Aorta (tissue), 5 donors: ENCODE measurements at regions of chr6 and their contacts with region 1.

Region 1: DNA sequence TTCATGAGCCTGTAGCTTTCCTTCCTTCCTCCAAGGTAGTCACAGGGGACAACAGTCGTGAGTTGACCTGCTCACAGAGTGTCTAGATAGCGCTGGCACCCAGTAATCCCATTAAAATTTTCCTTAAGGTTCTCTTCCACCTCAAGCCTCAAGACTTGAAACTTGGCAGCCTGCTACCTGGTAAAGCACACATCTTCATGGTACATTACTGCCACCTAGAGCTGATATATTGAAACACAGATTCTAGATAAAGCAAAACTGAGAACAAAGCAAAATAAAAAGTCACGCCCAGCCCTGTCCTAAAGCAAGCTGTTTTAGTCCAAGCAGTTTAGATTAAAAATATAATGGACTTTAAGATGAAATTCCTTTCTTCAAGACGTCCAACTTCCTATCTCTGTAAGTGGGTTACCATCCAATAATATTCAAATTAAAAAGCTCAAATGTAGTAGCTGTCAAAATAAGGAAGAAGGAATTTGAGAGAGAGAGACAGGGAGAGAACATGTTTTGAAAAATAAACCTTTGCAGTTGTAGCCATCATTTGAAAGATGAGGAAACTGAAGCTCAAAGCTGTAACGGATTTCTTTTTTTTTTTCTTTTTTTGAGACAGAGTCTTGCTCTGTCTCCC is 50.7 kb upstream of the CD83 start:
- DNase-seq: no peak
- ATAC-seq: peak; percentile 78
- H3K4me3 ChIP-seq: no peak overlapping the region
- H3K27ac ChIP-seq: no peak overlapping the region
- H3K4me1 ChIP-seq: no peaks in the 10 kb centered on the region
- H3K27me3 ChIP-seq: no peaks in the 10 kb centered on the region

Region 2: GRCh38 chr6:13336553-13336952 is 730.3 kb before region 1 on chr6:
- intact Hi-C with region 1: loop called in 1 of 2 experiments (anchors 5 kb)
- DNase-seq: peak in 1 of 2 donors; percentile 94
- ATAC-seq: peak; percentile 88
- H3K4me3 ChIP-seq: no peak overlapping the region
- H3K27ac ChIP-seq: no peak overlapping the region
- H3K4me1 ChIP-seq: no peaks in the 10 kb centered on the region
- H3K27me3 ChIP-seq: no peaks in the 10 kb centered on the region

Region 3: DNA sequence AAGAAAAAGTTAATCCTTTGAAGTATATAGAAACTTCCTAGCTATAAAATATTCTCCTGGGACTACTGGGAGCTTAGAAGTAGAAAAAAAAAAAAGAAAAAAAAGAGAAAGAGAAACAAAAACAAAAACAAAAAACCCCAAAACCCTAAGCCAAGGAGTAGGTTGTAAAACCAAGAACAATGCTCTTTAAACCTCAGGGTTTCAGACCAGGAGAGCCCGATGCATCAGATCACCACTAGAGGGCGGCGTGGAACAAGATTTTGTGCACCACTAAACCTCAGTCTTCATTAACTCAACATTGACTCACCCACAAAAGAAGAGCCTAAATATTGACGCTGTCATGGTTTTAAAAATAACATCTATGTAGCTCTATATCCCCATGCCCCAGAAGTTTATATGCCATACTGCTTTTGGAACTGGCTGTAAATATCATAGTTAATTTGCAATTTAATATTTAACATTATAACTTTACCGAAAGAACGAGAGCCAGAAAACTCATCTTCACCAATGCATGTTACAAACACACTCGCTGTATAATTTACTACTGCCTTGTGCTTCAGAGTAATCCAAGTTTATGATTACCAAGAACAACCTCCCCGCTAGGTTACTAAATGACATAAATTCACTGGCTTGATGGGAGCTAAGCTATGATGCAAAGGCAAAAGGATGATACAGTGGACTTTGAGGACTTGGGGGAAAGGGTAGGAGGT is 271.7 kb before region 1 on chr6:
- intact Hi-C with region 1: loop called in 1 of 2 experiments (anchors 10 kb)
- DNase-seq: peak; percentile 87 to 92
- ATAC-seq: peak; percentile 91
- H3K4me3 ChIP-seq: no peak overlapping the region
- H3K27ac ChIP-seq: no peak overlapping the region
- H3K4me1 ChIP-seq: no peaks in the 10 kb centered on the region
- H3K27me3 ChIP-seq: no peaks in the 10 kb centered on the region

Region 4: GRCh38 chr6:13814176-13814937 is 252.5 kb before region 1 on chr6 and contains the start of gene MCUR1:
- intact Hi-C with region 1: loop called in 1 of 2 experiments (anchors 10 kb)
- DNase-seq: peak; percentile 93 to 94
- ATAC-seq: peak; percentile 97
- H3K4me3 ChIP-seq: peak within 1 kb of the TSS; percentile 52 to 86
- H3K27ac ChIP-seq: peak within 1 kb of the TSS; percentile 65 to 95
- H3K4me1 ChIP-seq: peaks cover 0 to 2% of the 10 kb centered on the region in 2 donors
- H3K27me3 ChIP-seq: no peaks in the 10 kb centered on the region
- total RNA-seq, gene MCUR1: 17.3 to 19.3 TPM

Region 5: DNA sequence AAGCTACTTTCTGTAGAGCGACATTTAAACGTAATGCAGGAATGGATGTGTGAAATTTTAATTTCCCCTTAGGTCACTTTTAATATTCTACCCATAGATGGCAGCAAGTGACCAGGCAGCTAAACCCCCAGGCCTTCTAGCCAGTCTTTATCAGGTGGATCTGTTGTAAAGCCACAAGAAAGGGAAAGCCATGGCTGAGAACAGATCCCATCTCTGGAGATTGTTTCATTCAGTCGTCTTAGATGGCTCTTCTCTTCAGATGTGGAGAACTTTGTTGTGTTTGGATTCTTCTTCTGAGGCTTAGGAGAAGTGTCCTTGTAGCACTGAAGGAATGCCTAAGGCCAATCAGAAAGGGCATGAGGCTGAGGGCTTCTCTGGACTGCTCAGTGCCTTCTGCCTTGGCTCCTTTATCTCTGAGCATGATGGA is 157.9 kb before region 1 on chr6:
- intact Hi-C with region 1: loop called (anchors 2 to 5 kb)
- DNase-seq: peak in 1 of 2 donors; percentile 46
- ATAC-seq: no peak
- H3K4me3 ChIP-seq: no peak overlapping the region
- H3K27ac ChIP-seq: no peak overlapping the region
- H3K4me1 ChIP-seq: no peaks in the 10 kb centered on the region
- H3K27me3 ChIP-seq: no peaks in the 10 kb centered on the region

Region 6: DNA sequence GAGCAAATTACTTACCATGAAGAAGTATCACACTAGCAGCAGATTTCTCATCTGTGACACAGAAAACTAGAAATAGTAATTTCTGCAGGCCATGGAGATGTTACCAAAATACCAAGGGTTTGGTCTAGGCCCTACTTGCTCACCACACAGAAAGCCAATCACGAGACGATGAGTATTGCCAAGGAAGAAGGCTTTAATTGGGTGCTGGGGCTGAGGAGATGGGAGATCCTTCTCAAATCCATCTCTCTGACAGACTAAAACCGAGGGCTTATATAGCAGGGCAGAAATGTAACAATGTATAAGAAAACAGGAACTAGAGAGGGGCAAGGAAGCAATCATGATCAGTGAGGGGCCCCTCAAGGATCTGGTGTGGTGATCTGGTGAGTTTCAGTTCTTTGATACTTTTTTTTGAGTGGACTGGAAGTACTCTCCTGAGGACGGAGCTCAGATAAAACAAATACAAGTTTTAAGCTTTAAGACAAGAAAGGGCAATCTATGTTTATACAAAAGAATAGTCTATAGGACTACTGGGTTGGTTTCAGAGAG is 101.2 kb before region 1 on chr6:
- intact Hi-C with region 1: no loop called
- DNase-seq: no peak
- ATAC-seq: no peak
- H3K4me3 ChIP-seq: no peak overlapping the region
- H3K27ac ChIP-seq: no peak overlapping the region
- H3K4me1 ChIP-seq: no peaks in the 10 kb centered on the region
- H3K27me3 ChIP-seq: no peaks in the 10 kb centered on the region